Activated CD4-positive, alpha-beta T cell treated with anti-CD3 and anti-CD28 coated beads, Interleukin-2, amount 10 ng/mL, durations not matched to agents 24 days and 14 days (primary cell): ENCODE measurements at regions of chr1 and their contacts with region 1.

Region 1: DNA sequence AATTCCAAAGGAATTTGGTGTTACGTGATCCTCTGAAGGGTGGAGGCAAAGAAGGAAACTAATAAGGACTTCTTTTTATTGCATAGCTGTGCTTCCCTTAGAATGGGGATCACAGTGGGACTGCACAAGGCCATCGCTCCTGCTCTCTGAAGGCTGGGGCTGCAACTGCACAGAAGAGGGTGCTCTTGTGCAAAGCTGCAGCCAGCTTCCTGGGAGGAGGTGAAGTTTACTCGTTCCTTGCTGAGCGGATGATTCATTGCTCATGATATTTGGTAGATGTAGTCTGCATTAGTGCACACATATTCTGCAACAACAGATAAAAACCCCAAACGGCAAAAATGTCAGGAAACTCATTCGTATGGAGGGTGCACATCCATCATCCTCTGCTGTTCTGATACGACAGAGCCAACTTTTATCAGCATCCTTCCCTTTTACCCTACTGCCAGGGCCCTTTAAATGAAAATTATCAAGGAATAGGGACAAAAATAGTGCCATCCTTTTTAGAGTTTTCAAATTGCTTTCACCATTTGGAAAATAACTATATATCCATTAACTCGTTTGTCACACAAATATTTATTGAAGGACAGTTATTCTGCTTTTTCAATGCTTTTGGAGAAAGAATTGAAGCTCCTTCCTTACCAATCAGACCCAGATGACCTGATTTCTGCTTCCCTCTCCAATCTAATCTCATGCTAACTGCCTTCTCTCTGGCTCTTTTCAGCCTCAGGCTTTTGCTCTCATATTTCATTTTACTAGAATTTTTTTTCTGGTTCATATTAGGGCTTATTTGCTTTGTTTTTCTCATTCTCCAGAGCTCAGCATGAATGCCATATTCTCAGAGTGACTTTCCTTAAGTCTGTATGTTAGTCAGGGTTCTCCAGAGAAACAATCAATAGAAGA is 263.6 kb downstream of the DUSP10 start:
- DNase-seq: peak; percentile 82
- H3K4me3 Mint-ChIP-seq: no peak overlapping the region
- H3K27ac Mint-ChIP-seq: no peak overlapping the region
- H3K4me1 Mint-ChIP-seq: no peaks in the 10 kb centered on the region
- H3K27me3 Mint-ChIP-seq: peaks cover 21% of the 10 kb centered on the region

Region 2: GRCh38 chr1:222009105-222009730 is 530.9 kb after region 1 on chr1:
- intact Hi-C with region 1: loop called (anchors 1 kb)
- DNase-seq: peak; percentile 79
- H3K4me3 Mint-ChIP-seq: no peak overlapping the region
- H3K27ac Mint-ChIP-seq: no peak overlapping the region
- H3K4me1 Mint-ChIP-seq: no peaks in the 10 kb centered on the region
- H3K27me3 Mint-ChIP-seq: peaks cover 12% of the 10 kb centered on the region

Region 3: GRCh38 chr1:222171005-222171404 is 692.7 kb after region 1 on chr1:
- intact Hi-C with region 1: loop called (anchors 2 kb)
- DNase-seq: peak; percentile 57
- H3K4me3 Mint-ChIP-seq: no peak overlapping the region
- H3K27ac Mint-ChIP-seq: no peak overlapping the region
- H3K4me1 Mint-ChIP-seq: no peaks in the 10 kb centered on the region
- H3K27me3 Mint-ChIP-seq: no peaks in the 10 kb centered on the region

Region 4: GRCh38 chr1:222455188-222455879 is 977.0 kb after region 1 on chr1:
- intact Hi-C with region 1: loop called (anchors 2 kb)
- DNase-seq: peak; percentile 94
- H3K4me3 Mint-ChIP-seq: no peak overlapping the region
- H3K27ac Mint-ChIP-seq: no peak overlapping the region
- H3K4me1 Mint-ChIP-seq: peaks cover 6% of the 10 kb centered on the region
- H3K27me3 Mint-ChIP-seq: no peaks in the 10 kb centered on the region